ENCODE measurements at regions of chr22 and their contacts with region 1.

Region 1: DNA sequence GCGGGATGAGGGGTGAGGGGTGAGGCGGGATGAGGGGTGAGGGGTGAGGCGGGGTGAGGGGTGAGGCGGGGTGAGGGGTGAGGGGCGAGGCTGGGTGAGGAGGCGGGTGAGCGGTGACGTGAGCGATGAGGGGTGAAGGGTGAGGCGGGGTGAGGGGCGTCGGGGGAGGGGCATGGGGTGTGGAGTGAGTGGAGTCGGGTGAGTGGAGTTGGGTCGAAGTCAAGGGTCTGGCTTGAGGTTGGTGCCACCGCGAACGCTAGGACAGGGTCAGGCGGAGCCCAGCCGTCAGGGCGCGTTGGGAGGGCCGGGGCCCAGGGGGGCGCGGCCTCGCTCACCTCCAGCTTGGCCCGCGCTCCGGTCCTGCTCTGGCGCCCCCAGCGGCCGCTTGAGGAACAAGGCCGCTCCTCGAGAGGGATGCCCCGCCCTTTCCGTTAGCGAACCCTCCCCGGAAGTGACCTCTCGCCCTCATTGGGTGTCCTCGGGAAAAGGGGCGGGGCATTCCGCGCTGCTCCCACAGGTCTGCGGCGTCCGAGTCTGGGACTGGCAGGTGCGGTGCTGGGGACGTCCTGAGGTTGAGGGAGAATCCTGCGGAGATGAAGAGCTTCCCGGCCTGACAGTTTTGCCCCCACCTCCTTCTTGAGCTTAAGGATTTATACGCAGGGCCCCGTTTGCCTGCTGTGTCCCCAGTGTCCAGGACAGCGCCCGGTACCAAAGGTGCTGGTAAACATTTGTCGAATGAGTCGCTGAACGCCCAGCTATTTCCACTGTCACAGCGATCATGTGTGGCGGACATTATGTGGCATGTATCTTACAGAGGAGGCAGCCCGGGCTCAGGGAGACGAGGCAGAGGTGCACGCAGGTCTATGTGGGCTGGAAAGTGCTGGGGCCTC is at the start of gene SYCE3:
- DNase-seq: peak; percentile 98
- ATAC-seq: peak; percentile 97
- H3K4me3 Mint-ChIP-seq: peak within 1 kb of the TSS; percentile 91
- H3K27ac Mint-ChIP-seq: peak within 1 kb of the TSS; percentile 85
- H3K4me1 Mint-ChIP-seq: peaks cover 19% of the 10 kb centered on the region
- H3K27me3 Mint-ChIP-seq: peaks cover 16% of the 10 kb centered on the region
- total RNA-seq, gene SYCE3: not detected

Region 2: DNA sequence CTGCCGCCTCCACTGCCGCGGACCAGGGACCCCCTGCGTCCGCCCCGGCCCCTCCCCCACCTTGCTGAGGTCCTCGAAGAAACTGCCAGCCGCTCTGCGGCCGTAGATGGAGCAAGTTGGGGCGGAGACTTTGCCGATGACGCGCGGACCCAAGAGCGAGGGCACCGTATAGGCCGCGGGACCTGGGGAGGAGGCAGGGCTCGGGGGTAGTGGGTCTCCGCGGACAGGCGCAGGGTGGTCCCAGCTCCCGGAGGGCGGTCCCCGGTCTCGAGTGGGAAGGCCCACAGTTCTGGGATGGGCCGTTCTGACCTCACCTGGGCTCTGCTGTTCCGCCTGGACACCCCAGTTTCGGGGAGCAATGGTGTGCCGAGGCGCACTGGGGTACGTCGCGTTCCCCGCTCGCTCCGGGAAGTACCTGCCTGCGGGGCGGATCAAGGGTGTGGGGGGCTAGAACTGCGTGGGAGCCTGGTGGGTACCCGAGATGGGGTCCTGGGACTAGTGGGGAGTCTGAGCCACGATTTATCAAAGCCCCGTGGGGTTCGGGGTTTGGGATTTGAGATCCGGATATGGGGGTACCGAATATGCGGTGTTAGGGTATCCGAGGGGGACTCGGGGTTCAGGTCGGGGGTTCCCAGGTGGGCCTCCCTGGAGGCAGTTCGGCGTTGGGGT is 31.8 kb before region 1 on chr22:
- CTCF ChIA-PET with region 1: interaction called, 40 read pairs
- POLR2A ChIA-PET with region 1: interaction called, 58 read pairs
- DNase-seq: peak; percentile 92
- ATAC-seq: peak; percentile 47
- H3K4me3 Mint-ChIP-seq: peak overlapping the region; percentile 94
- H3K27ac Mint-ChIP-seq: peak overlapping the region; percentile 100
- H3K4me1 Mint-ChIP-seq: peaks cover 51% of the 10 kb centered on the region
- H3K27me3 Mint-ChIP-seq: no peaks in the 10 kb centered on the region

Region 3: GRCh38 chr22:50537765-50538164 is 25.0 kb before region 1 on chr22:
- CTCF ChIA-PET with region 1: interaction called, 14 read pairs
- POLR2A ChIA-PET with region 1: interaction called, 30 read pairs
- DNase-seq: no peak
- ATAC-seq: no peak
- H3K4me3 Mint-ChIP-seq: no peak overlapping the region
- H3K27ac Mint-ChIP-seq: peak overlapping the region; percentile 100
- H3K4me1 Mint-ChIP-seq: peaks cover 73% of the 10 kb centered on the region
- H3K27me3 Mint-ChIP-seq: no peaks in the 10 kb centered on the region

Region 4: DNA sequence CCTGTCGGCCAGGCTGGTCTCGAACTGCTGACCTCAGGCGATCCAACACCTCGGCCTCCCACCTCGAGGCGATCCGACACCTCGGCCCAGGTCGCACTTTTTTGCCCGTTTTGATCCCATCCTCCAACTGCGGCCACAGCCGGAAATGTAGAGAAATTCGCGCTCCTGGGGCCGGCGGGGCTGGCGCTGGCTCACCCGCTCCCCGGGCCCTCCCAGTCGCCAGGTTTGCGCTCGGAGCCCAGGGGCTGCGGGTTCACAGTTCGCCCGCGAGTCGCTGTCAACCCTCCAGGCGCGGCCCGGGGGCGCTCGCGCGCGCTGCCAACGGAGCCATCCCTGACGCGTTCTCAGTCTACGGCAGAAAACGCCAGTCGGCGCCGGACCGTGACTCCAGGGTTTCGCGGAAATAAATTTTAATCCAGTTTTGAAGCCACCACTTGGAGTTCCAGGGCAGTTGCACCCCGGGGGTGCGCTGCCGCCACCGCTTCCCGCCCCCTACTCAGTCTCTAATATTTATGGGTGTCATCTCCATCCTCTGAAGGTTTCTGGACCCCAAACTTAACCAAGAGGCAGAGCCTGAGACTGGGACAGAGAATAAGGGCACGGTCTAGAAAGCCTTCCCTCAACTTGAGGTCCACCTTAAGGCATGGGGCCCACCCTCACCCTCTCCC is 18.6 kb before region 1 on chr22:
- CTCF ChIA-PET with region 1: interaction called, 57 read pairs
- POLR2A ChIA-PET with region 1: interaction called, 30 read pairs
- DNase-seq: peak; percentile 91
- ATAC-seq: peak; percentile 60
- H3K4me3 Mint-ChIP-seq: peak overlapping the region; percentile 60
- H3K27ac Mint-ChIP-seq: peak overlapping the region; percentile 86
- H3K4me1 Mint-ChIP-seq: peaks cover 61% of the 10 kb centered on the region
- H3K27me3 Mint-ChIP-seq: no peaks in the 10 kb centered on the region

Region 5: DNA sequence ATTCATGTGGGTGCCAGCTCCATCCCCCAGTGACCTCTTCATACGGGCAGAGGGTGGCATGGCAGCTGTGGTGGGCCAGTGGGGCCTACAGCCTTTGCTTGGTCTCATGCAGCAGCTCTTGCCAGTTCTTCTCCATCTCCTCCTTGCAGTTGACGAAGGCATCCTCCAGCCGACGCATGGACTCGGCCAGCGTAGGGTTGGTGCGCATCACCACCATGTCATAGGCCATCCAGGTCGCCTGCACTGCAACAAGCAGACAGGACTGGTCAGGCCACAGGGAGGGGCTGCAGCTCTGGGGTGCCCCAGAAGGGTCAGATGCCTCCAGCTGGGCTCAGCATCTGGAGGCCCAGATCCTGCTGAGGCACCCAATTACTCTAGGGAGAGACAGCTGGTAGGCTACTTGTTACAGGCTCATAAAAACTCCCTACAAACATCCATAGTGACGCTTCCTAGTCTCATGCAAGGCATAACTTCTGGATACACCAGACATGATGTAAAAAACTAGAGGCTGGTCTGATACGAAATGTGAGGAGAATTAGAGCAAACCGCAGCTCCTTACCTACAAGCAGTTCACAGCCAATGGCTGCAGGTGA is 11.5 kb before region 1 on chr22:
- CTCF ChIA-PET with region 1: interaction called, 57 read pairs
- POLR2A ChIA-PET with region 1: interaction called, 12 read pairs
- DNase-seq: no peak
- ATAC-seq: no peak
- H3K4me3 Mint-ChIP-seq: no peak overlapping the region
- H3K27ac Mint-ChIP-seq: no peak overlapping the region
- H3K4me1 Mint-ChIP-seq: peaks cover 18% of the 10 kb centered on the region
- H3K27me3 Mint-ChIP-seq: peaks cover 7% of the 10 kb centered on the region

Region 6: DNA sequence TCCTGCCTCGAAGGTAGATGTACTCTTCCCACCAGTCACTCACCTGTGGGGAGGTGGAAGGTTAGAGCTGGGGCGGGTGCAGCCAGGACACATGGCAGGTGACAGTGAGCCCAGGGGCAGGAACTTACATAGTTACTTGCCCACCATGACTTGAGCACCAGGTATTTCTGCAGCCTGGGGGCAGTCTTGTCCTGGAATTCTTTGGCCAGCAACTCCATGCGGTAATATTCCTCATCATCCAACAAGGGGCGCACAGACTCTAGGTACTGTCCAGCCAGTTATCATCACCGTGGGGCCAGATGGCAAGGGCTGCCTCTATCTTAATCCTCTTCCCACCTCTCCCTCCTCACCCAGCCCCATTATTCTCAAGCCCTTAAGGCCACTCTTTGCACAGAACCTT is 13.3 kb after region 1 on chr22:
- CTCF ChIA-PET with region 1: interaction called, 19 read pairs
- POLR2A ChIA-PET with region 1: interaction called, 14 read pairs
- DNase-seq: no peak
- ATAC-seq: no peak
- H3K4me3 Mint-ChIP-seq: no peak overlapping the region
- H3K27ac Mint-ChIP-seq: peak overlapping the region; percentile 12
- H3K4me1 Mint-ChIP-seq: peaks cover 31% of the 10 kb centered on the region
- H3K27me3 Mint-ChIP-seq: no peaks in the 10 kb centered on the region

Region 7: GRCh38 chr22:50582562-50583293 is 20.0 kb after region 1 on chr22 and contains the start of gene CHKB:
- CTCF ChIA-PET with region 1: interaction called, 19 read pairs
- POLR2A ChIA-PET with region 1: interaction called, 9 read pairs
- DNase-seq: peak; percentile 99
- ATAC-seq: peak; percentile 96
- H3K4me3 Mint-ChIP-seq: peak within 1 kb of the TSS; percentile 98
- H3K27ac Mint-ChIP-seq: peak within 1 kb of the TSS; percentile 94
- H3K4me1 Mint-ChIP-seq: peaks cover 42% of the 10 kb centered on the region
- H3K27me3 Mint-ChIP-seq: no peaks in the 10 kb centered on the region
- total RNA-seq, gene CHKB: 98.9 to 101 TPM